GM12878 (cell line): ENCODE measurements at regions of chr2 and their contacts with region 1.

Region 1: GRCh38 chr2:37523814-37524362 is 147.6 kb downstream of the CDC42EP3 start:
- DNase-seq: no peak
- ATAC-seq: no peak
- H3K4me3 ChIP-seq: no peak overlapping the region
- H3K27ac ChIP-seq: no peak overlapping the region
- H3K4me1 ChIP-seq: no peaks in the 10 kb centered on the region
- H3K27me3 ChIP-seq: no peaks in the 10 kb centered on the region
- CTCF ChIP-seq: no peak
- EP300 ChIP-seq: no peak
- POLR2A ChIP-seq: no peak
- RAD21 ChIP-seq: no peak

Region 2: DNA sequence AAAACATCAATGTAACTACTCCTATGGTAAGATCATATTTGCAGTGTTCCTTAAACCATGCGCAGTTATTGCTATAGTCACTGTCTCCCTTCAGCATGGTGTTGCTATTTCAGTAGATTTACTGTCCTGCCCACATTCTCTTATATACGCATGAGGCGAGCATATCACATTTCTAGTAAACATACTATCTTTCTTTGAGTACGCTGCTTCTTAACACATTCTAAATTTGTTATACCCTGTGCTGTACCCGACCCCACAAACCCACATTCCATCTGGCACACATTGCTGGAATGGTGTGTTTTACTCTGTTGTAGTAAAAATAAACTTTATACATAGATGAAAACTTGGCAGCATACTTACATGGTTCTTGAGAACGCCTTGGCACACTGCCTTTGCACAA is 16.2 kb before region 1 on chr2:
- CTCF ChIA-PET with region 1: no interaction called
- POLR2A ChIA-PET with region 1: no interaction called
- RAD21 ChIA-PET with region 1: no interaction called
- SMC1A ChIA-PET with region 1: interaction called, 4 read pairs
- in situ Hi-C with region 1: no loop called
- intact Hi-C with region 1: loop called (anchors 2 kb)
- DNase-seq: no peak
- ATAC-seq: no peak
- H3K4me3 ChIP-seq: no peak overlapping the region
- H3K27ac ChIP-seq: no peak overlapping the region
- H3K4me1 ChIP-seq: no peaks in the 10 kb centered on the region
- H3K27me3 ChIP-seq: no peaks in the 10 kb centered on the region
- CTCF ChIP-seq: no peak
- EP300 ChIP-seq: no peak
- POLR2A ChIP-seq: no peak
- RAD21 ChIP-seq: no peak

Region 3: GRCh38 chr2:37614061-37614738 is 90.3 kb after region 1 on chr2:
- CTCF ChIA-PET with region 1: no interaction called
- POLR2A ChIA-PET with region 1: no interaction called
- RAD21 ChIA-PET with region 1: no interaction called
- SMC1A ChIA-PET with region 1: no interaction called
- in situ Hi-C with region 1: no loop called
- intact Hi-C with region 1: no loop called
- DNase-seq: no peak
- ATAC-seq: no peak
- H3K4me3 ChIP-seq: no peak overlapping the region
- H3K27ac ChIP-seq: no peak overlapping the region
- H3K4me1 ChIP-seq: peaks cover 17% of the 10 kb centered on the region
- H3K27me3 ChIP-seq: no peaks in the 10 kb centered on the region
- CTCF ChIP-seq: no peak
- EP300 ChIP-seq: no peak
- POLR2A ChIP-seq: no peak
- RAD21 ChIP-seq: no peak

Region 4: DNA sequence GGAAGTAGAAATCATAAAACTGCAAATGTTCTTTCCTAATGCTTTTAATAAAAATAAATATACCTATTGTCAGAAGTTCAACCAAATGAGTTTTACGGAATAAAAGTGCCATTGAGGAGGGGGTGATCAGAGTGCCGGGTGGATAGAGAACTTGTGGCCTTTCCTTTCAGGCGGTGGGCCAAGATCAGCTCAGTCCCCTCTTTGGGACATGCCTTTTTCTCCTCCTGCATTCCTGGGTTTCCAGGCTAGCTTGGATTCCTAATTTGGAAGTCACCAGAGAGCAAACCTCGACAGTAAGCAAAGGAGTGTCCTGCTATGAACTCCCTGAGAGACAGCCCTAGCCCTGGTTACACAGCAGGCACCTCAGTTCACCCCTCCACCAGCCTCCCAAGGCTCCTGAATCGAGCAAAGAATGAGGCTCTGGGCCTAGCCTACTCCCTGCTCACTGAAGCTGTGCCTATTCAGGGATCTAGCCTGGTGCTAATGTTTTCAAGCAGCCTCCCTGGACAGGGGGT is 334.4 kb after region 1 on chr2:
- CTCF ChIA-PET with region 1: no interaction called
- POLR2A ChIA-PET with region 1: no interaction called
- RAD21 ChIA-PET with region 1: no interaction called
- SMC1A ChIA-PET with region 1: no interaction called
- in situ Hi-C with region 1: no loop called
- intact Hi-C with region 1: no loop called
- DNase-seq: no peak
- ATAC-seq: no peak; the same call in 1 of the 3 replicates
- H3K4me3 ChIP-seq: no peak overlapping the region
- H3K27ac ChIP-seq: no peak overlapping the region
- H3K4me1 ChIP-seq: peaks cover 9% of the 10 kb centered on the region
- H3K27me3 ChIP-seq: no peaks in the 10 kb centered on the region
- CTCF ChIP-seq: no peak
- EP300 ChIP-seq: no peak
- POLR2A ChIP-seq: no peak
- RAD21 ChIP-seq: no peak